Naive thymus-derived CD4-positive, alpha-beta T cell (primary cell): ENCODE measurements at regions of chr10 and their contacts with region 1.

Region 1: GRCh38 chr10:119542988-119543813 is 682 bp upstream of the RGS10 start:
- DNase-seq: peak; percentile 54 to 74 (median 68)
- ATAC-seq: peak; percentile 68
- H3K4me3 ChIP-seq: peak overlapping the region; percentile 96
- H3K4me3 Mint-ChIP-seq: peak overlapping the region; percentile 83 to 97 (median 94)
- H3K27ac ChIP-seq: peak overlapping the region; percentile 89
- H3K27ac Mint-ChIP-seq: peak overlapping the region; percentile 86 to 95 (median 91)
- H3K4me1 ChIP-seq: peaks cover 15 to 19% of the 10 kb centered on the region in 2 donors
- H3K4me1 Mint-ChIP-seq: peaks cover 19 to 41% (median 28%) of the 10 kb centered on the region in 7 donors
- H3K27me3 ChIP-seq: no peaks in the 10 kb centered on the region
- H3K27me3 Mint-ChIP-seq: peaks cover 0 to 17% (median 3%) of the 10 kb centered on the region in 5 donors

Region 2: DNA sequence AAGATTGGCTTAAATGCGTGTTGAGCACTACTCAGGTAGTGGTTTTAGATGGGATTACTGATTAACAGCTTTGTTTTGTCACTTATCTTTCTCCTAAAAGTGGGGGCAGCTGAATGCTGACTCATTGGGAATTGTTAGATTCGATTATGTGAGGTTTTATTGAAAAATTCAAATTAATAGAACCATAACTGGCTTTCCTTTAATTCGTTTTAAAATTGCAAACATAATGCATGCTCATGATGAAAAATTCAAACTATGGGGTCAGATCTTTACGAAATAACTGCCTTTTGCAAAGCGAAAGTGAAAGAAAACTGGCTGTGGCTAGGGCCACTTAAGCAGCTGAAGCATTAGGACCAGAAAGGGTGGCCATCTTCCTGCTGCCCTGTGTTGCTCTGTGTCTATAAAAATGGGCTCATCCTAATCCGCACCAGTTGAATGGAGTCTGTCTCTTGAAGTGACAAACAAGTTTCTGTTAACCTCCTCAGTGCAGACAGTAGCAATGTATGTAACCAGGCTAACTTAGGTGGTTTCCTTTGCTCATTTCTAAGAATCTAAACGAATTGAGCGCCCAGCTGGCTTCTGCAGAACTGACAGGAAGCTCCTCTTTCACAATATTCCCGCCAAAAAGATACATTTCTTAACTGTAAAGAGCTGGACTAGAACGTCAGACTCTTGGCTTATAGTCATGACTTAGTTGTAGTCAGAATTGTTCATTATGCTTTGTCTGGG is 411.5 kb before region 1 on chr10:
- CTCF ChIA-PET with region 1: no interaction called
- POLR2A ChIA-PET with region 1: no interaction called
- intact Hi-C with region 1: loop called in 1 of 2 experiments (anchors 5 kb)
- DNase-seq: peak in 8 of 9 donors; percentile 24 to 61 (median 40)
- ATAC-seq: peak; percentile 77
- H3K4me3 ChIP-seq: peak overlapping the region; percentile 73
- H3K4me3 Mint-ChIP-seq: peak overlapping the region; percentile 81 to 96 (median 91)
- H3K27ac ChIP-seq: peak overlapping the region; percentile 66
- H3K27ac Mint-ChIP-seq: peak overlapping the region; percentile 92 to 97 (median 95)
- H3K4me1 ChIP-seq: peaks cover 8 to 16% of the 10 kb centered on the region in 2 donors
- H3K4me1 Mint-ChIP-seq: peaks cover 16 to 59% (median 32%) of the 10 kb centered on the region in 7 donors
- H3K27me3 ChIP-seq: no peaks in the 10 kb centered on the region
- H3K27me3 Mint-ChIP-seq: no peaks in the 10 kb centered on the region

Region 3: GRCh38 chr10:119199231-119199992 is 343.8 kb before region 1 on chr10:
- CTCF ChIA-PET with region 1: interaction called, 22 read pairs
- POLR2A ChIA-PET with region 1: interaction called, 7 read pairs
- intact Hi-C with region 1: loop called (anchors 1 to 2 kb)
- DNase-seq: peak in 8 of 9 donors; percentile 42 to 72 (median 58)
- ATAC-seq: peak; percentile 93
- H3K4me3 ChIP-seq: no peak overlapping the region
- H3K4me3 Mint-ChIP-seq: peak overlapping the region in 1 of 10 donors; percentile 35
- H3K27ac ChIP-seq: no peak overlapping the region
- H3K27ac Mint-ChIP-seq: peak overlapping the region in 3 of 9 donors; percentile 46 to 73 (median 56)
- H3K4me1 ChIP-seq: no peaks in the 10 kb centered on the region
- H3K4me1 Mint-ChIP-seq: peaks cover 4 to 30% (median 9%) of the 10 kb centered on the region in 7 donors
- H3K27me3 ChIP-seq: no peaks in the 10 kb centered on the region
- H3K27me3 Mint-ChIP-seq: peaks cover 0 to 5% (median 0%) of the 10 kb centered on the region in 5 donors

Region 4: GRCh38 chr10:119445311-119445934 is 97.8 kb before region 1 on chr10:
- CTCF ChIA-PET with region 1: interaction called, 9 read pairs
- POLR2A ChIA-PET with region 1: interaction called, 15 read pairs
- intact Hi-C with region 1: loop called (anchors 1 kb)
- DNase-seq: peak; percentile 64 to 89 (median 76)
- ATAC-seq: peak; percentile 85
- H3K4me3 ChIP-seq: no peak overlapping the region
- H3K4me3 Mint-ChIP-seq: peak overlapping the region in 1 of 10 donors; percentile 60
- H3K27ac ChIP-seq: no peak overlapping the region
- H3K27ac Mint-ChIP-seq: peak overlapping the region in 8 of 9 donors; percentile 6 to 81 (median 52)
- H3K4me1 ChIP-seq: no peaks in the 10 kb centered on the region
- H3K4me1 Mint-ChIP-seq: peaks cover 12 to 23% (median 17%) of the 10 kb centered on the region in 7 donors
- H3K27me3 ChIP-seq: no peaks in the 10 kb centered on the region
- H3K27me3 Mint-ChIP-seq: no peaks in the 10 kb centered on the region

Region 5: DNA sequence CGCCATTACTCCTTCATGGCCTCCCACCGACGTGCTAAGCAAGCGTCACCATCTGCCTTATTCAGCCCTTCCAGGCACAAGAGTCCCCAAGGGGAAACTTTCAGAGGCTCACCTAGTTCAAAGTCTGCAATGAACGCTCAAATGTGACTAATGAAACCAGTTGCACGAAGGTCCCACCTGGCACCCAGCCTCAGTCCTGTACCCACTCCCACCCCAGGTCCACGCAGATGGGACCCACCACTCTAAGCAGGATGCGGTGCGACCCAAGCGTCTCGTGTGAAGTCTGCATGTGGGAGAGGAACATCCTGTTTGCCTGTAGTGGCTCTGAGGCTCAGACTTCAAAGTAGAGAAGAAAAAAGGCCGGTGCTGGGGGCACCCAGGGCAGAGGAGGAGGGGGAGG is 41.0 kb before region 1 on chr10:
- CTCF ChIA-PET with region 1: interaction called, 28 read pairs
- POLR2A ChIA-PET with region 1: interaction called, 169 read pairs
- intact Hi-C with region 1: loop called (anchors 1 kb)
- DNase-seq: peak; percentile 50 to 93 (median 91)
- ATAC-seq: peak; percentile 91
- H3K4me3 ChIP-seq: peak overlapping the region; percentile 46
- H3K4me3 Mint-ChIP-seq: peak overlapping the region; percentile 70 to 85 (median 82)
- H3K27ac ChIP-seq: peak overlapping the region; percentile 98
- H3K27ac Mint-ChIP-seq: peak overlapping the region; percentile 95 to 100 (median 99)
- H3K4me1 ChIP-seq: peaks cover 39 to 88% of the 10 kb centered on the region in 2 donors
- H3K4me1 Mint-ChIP-seq: peaks cover 56 to 98% (median 92%) of the 10 kb centered on the region in 7 donors
- H3K27me3 ChIP-seq: no peaks in the 10 kb centered on the region
- H3K27me3 Mint-ChIP-seq: no peaks in the 10 kb centered on the region

Region 6: GRCh38 chr10:119596537-119597404 is 53.6 kb after region 1 on chr10 and contains the start of gene TIAL1:
- CTCF ChIA-PET with region 1: interaction called, 16 read pairs
- POLR2A ChIA-PET with region 1: interaction called, 4 read pairs
- intact Hi-C with region 1: loop called (anchors 1 kb)
- DNase-seq: peak; percentile 73 to 95 (median 89)
- ATAC-seq: peak; percentile 88
- H3K4me3 ChIP-seq: peak within 1 kb of the TSS; percentile 96
- H3K4me3 Mint-ChIP-seq: peak within 1 kb of the TSS; percentile 85 to 99 (median 96)
- H3K27ac ChIP-seq: peak within 1 kb of the TSS; percentile 98
- H3K27ac Mint-ChIP-seq: peak within 1 kb of the TSS; percentile 90 to 99 (median 96)
- H3K4me1 ChIP-seq: peaks cover 28 to 38% of the 10 kb centered on the region in 2 donors
- H3K4me1 Mint-ChIP-seq: peaks cover 35 to 56% (median 48%) of the 10 kb centered on the region in 7 donors
- H3K27me3 ChIP-seq: no peaks in the 10 kb centered on the region
- H3K27me3 Mint-ChIP-seq: no peaks in the 10 kb centered on the region
- total RNA-seq, gene TIAL1: 166 to 228 (median 176) TPM

Region 7: GRCh38 chr10:119872860-119873681 is 329.9 kb after region 1 on chr10:
- CTCF ChIA-PET with region 1: no interaction called
- POLR2A ChIA-PET with region 1: interaction called, 4 read pairs
- intact Hi-C with region 1: loop called (anchors 5 kb)
- DNase-seq: peak; percentile 81 to 88 (median 86)
- ATAC-seq: peak; percentile 96
- H3K4me3 ChIP-seq: peak overlapping the region; percentile 97
- H3K4me3 Mint-ChIP-seq: peak overlapping the region; percentile 82 to 92 (median 89)
- H3K27ac ChIP-seq: peak overlapping the region; percentile 84
- H3K27ac Mint-ChIP-seq: peak overlapping the region; percentile 79 to 95 (median 92)
- H3K4me1 ChIP-seq: peaks cover 21 to 28% of the 10 kb centered on the region in 2 donors
- H3K4me1 Mint-ChIP-seq: peaks cover 23 to 46% (median 41%) of the 10 kb centered on the region in 7 donors
- H3K27me3 ChIP-seq: no peaks in the 10 kb centered on the region
- H3K27me3 Mint-ChIP-seq: peaks cover 0 to 6% (median 0%) of the 10 kb centered on the region in 5 donors

Region 8: DNA sequence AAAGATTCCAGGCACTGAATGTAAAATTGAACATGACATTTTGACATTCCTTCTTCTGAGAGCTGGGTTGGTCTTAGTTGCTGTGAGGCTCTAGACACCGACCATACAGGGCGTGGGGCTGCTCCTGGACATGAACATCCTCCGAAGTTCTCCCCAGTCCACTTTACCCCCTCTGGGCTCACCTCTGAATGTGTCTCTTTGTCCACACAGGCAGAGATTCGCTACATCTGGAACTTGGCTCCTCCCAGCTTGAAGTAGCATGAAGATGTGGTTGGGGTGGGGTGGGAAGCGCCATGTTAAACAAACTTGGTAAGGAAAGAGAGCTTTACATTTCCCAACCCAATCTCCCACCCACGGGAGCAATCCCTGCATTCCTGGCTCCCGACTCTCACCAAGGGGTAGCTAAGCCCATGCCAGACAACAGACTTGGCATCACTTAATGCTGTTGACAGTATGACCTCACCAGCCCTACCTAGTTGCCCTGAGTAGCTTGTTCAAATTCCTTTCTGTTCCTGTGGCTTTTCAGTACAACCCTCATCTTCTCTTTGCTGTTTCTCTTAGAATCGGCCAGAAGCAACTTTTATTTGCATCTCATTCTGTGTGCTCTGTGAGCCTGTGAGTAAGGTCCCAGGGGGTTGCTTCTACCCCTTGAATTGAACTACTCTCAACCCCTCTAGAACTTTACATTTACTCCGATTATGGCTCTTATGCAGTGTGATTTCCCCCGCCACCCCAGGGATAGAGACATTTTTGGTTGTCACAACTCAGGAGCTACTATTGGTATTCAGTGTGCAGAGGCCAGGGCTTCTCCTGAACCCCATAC is 560.7 kb after region 1 on chr10:
- CTCF ChIA-PET with region 1: no interaction called
- POLR2A ChIA-PET with region 1: no interaction called
- intact Hi-C with region 1: no loop called
- DNase-seq: no peak
- ATAC-seq: no peak
- H3K4me3 ChIP-seq: no peak overlapping the region
- H3K4me3 Mint-ChIP-seq: no peak overlapping the region
- H3K27ac ChIP-seq: no peak overlapping the region
- H3K27ac Mint-ChIP-seq: no peak overlapping the region
- H3K4me1 ChIP-seq: no peaks in the 10 kb centered on the region
- H3K4me1 Mint-ChIP-seq: peaks cover 0 to 1% (median 0%) of the 10 kb centered on the region in 7 donors
- H3K27me3 ChIP-seq: no peaks in the 10 kb centered on the region
- H3K27me3 Mint-ChIP-seq: peaks cover 2 to 43% (median 22%) of the 10 kb centered on the region in 5 donors